ENCODE measurements at regions of chr11 and their contacts with region 1.

Region 1: DNA sequence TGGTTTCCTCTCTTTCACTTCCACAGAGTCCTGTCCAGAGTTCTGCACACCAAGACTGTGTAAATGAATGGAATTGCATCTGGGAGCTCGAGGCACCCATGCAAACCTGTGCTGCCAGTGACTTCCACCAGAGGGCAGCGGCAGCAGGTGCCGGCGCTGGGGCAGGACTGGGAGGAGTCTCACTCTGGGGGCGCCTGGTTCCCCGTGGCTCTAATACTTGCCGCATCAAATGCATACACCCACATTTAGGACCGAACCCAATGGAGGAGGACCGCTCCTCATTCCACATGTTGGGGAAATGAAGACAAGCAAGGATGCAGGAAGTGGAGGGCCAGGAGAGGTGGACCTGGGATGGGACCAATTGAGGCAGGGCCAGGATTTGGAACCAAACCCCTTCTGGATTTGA is 1.1 kb upstream of the CD6 start:
- DNase-seq: peak; percentile 95
- H3K4me3 Mint-ChIP-seq: peak overlapping the region; percentile 93
- H3K27ac Mint-ChIP-seq: peak overlapping the region; percentile 64
- H3K4me1 Mint-ChIP-seq: peaks cover 25% of the 10 kb centered on the region
- H3K27me3 Mint-ChIP-seq: peaks cover 11% of the 10 kb centered on the region

Region 2: GRCh38 chr11:60953771-60954170 is 16.6 kb before region 1 on chr11:
- intact Hi-C with region 1: no loop called
- DNase-seq: no peak
- H3K4me3 Mint-ChIP-seq: no peak overlapping the region
- H3K27ac Mint-ChIP-seq: no peak overlapping the region
- H3K4me1 Mint-ChIP-seq: peaks cover 16% of the 10 kb centered on the region
- H3K27me3 Mint-ChIP-seq: peaks cover 31% of the 10 kb centered on the region

Region 3: DNA sequence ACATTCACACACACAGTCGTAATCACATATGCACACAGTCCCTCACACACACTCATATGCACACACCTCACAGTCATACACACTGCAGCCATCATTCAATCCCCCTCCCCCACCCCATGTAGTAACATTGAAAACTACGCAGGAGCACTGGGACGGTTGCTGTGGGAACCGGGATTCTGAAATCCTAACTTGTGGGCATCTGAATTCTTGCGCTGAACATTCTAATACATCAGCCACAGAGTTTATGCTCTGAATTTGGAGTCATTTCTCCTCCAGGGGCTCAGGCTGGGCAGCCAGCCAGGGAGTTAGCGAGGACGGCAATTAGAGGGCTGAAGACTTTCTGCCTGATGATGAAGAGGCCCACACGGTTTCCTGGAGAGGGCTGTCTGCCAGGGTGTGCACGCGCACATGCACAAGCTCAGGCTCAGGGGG is 33.8 kb after region 1 on chr11:
- intact Hi-C with region 1: no loop called
- DNase-seq: peak; percentile 80
- H3K4me3 Mint-ChIP-seq: peak overlapping the region; percentile 82
- H3K27ac Mint-ChIP-seq: peak overlapping the region; percentile 91
- H3K4me1 Mint-ChIP-seq: peaks cover 69% of the 10 kb centered on the region
- H3K27me3 Mint-ChIP-seq: no peaks in the 10 kb centered on the region

Region 4: DNA sequence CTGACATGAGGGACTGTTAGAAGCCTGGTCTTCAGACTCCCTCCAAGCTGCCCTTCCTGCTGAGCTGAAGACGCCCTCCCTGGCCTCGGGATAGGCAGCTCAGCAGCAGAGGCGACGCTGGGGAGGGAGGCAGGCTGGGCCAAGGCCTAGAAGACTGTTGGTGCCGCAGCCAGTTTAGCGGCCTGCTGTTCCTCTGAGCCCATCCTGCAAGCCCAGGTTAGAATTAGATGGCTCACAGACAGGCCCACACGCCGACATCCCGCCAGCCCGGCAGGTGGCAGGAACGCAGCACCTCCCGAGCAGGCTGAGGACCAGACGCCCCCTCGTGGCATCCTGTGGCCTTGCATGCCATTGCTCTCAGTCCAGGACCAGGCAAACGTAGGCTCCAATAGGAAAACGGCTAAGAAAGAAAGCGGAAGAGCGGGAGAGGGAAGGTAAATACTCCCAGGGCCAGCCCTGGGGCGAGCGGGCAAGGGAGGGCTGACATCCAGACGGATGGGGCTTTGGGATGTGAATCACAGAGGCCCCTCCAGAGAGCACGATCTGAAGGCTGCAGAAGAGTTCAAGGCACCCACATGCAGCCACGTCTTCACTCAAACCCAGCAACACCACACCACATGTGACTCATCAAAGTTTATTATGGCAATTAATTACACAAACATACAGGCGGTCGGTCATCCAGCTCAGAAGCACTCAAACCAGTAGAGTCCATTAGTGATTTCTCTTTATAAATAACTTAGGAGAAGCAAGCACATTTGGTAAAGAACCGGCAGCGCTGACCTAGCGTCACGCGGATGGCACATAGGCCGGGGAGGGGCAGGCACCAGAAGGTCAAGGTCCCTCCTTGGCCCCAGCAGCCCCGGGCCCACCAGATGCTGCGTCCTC is 159.5 kb after region 1 on chr11:
- intact Hi-C with region 1: loop called (anchors 1 kb)
- DNase-seq: peak; percentile 97
- H3K4me3 Mint-ChIP-seq: peak overlapping the region; percentile 50
- H3K27ac Mint-ChIP-seq: peak overlapping the region; percentile 64
- H3K4me1 Mint-ChIP-seq: peaks cover 13% of the 10 kb centered on the region
- H3K27me3 Mint-ChIP-seq: no peaks in the 10 kb centered on the region

Region 5: DNA sequence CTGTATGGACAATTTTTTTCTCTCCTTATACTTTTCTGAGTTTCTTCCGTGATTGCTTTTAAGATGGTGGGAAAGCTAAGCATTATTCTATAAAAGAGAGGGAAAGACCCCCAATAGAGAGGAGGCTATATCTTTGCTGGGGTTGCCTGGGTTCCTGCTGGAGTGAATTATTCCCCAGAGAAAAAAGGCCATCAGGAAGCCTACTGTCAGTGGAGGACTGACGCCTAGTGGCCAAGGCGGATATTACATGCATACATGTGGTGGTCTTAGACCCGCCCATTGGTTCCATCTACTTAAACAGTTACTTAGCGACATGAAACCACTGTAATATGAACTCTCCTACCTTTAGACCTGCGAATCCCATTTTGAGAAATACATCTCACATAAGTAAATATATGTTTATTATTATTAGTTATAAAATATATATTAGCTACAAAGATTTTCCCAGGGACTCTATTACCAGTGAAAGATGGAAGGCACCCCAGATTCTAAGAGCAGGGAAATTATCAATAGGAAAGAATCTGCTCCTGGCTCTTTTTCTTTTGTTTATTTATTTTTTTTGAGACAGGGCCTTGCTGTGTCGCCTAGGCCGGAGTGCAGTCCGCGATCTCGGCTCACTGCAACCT is 217.2 kb after region 1 on chr11:
- intact Hi-C with region 1: loop called (anchors 1 kb)
- DNase-seq: peak; percentile 93
- H3K4me3 Mint-ChIP-seq: no peak overlapping the region
- H3K27ac Mint-ChIP-seq: no peak overlapping the region
- H3K4me1 Mint-ChIP-seq: peaks cover 2% of the 10 kb centered on the region
- H3K27me3 Mint-ChIP-seq: peaks cover 6% of the 10 kb centered on the region